GM10248 (cell line): ENCODE measurements at regions of chr16 and their contacts with region 1.

Region 1: GRCh38 chr16:69166221-69166833 is 20.6 kb upstream of the SNTB2 start:
- DNase-seq: peak; percentile 71
- CTCF ChIP-seq: no peak

Region 2: GRCh38 chr16:69138617-69139016 is 27.7 kb before region 1 on chr16:
- CTCF ChIA-PET with region 1: no interaction called
- POLR2A ChIA-PET with region 1: no interaction called
- DNase-seq: no peak
- CTCF ChIP-seq: no peak

Region 3: GRCh38 chr16:69150146-69150865 is 16.0 kb before region 1 on chr16:
- CTCF ChIA-PET with region 1: interaction called, 30 read pairs
- POLR2A ChIA-PET with region 1: no interaction called
- DNase-seq: peak; percentile 71
- CTCF ChIP-seq: peak; percentile 56

Region 4: DNA sequence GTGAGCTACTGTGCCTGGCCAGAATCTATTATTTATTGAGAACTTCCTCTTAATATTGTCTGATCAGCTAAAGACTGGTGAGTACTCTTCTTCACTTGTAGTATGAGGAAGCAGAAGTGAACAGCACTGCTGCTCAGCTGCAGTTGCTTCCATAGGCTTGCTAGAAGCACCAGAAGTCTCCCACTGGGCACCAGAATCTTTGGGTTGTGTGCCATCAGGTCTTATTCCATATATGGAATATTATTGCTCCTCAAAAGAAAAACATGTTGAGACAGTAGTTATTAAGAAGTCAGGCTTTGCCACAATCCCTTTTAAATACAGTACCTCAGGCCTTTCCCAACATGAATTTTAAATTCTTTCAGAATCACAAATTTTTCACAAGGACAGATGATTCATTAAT is 37.8 kb after region 1 on chr16:
- CTCF ChIA-PET with region 1: no interaction called
- POLR2A ChIA-PET with region 1: no interaction called
- DNase-seq: no peak
- CTCF ChIP-seq: no peak

Region 5: DNA sequence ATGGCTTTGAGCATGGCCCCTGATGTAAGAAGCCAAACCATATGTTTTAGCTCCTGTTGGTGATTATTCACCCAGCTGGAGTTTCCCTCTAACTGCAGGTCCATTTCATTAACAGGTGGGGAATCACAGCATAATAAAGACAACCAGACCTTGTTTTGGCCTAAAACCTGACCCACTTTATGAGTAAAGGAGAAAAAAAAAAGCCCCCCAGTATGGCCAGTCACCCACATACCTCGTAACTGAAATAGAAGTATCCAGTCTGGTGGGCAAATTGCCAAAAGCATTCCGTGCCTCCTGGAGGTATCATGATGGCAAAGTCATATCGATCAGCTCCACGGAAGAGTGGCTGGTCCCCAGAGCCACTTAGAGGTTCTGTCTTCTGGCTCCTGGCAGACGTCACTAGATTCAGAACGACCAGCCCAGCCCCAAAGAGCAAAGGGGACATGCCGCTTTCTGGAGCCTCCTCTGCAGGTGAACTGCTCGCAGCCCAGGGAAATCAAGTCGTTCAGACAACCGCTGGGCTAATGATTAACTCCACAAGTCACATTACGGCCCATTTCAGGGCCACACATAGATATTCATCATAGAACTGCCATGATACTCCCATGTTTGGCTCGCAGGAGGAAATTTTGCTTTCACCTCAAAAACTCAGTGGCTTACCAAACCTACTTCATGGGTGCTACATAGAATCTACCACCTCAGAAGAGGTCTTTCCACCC is 185.1 kb after region 1 on chr16 and contains the start of gene TMED6:
- CTCF ChIA-PET with region 1: no interaction called
- POLR2A ChIA-PET with region 1: no interaction called
- DNase-seq: no peak
- CTCF ChIP-seq: no peak